GM12878 (cell line): ENCODE measurements at regions of chr5 and their contacts with region 1.

Region 1: DNA sequence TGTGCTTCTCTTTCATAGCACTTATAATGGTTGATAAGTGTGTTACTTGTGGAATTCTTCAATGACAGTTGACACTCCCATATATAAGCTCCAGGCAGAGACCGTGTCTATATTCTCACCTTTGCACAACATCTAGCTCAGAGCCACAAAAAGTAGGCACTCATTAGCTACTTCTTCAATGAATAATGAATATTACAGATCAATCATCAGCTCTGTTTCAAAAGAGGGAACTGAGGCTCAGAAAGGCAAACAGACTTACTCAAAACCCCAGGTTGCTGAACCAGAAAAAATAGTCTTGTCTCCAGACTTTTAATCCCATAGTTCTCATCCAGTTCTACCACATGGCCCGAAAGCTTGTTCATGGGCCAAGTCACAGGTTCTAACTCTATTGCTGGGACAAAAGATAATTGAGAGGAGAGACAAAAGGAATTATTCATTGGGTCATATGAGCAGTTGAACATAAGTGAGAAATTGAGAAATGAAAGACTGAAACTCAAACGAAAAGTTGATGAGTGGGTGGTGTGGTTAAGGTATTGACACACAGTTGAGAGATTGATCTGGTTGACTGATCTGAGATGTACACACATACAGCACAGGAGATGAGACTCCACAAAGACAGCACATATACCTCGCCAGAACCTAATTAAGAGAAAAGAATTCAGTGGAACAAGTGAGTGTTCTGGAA is 381.6 kb downstream of the EFNA5 start:
- DNase-seq: peak; percentile 91
- ATAC-seq: peak; percentile 94
- H3K4me3 ChIP-seq: no peak overlapping the region
- H3K27ac ChIP-seq: peak overlapping the region; percentile 14; the same call in 1 of the 2 replicates
- H3K4me1 ChIP-seq: peaks cover 23% of the 10 kb centered on the region
- H3K27me3 ChIP-seq: no peaks in the 10 kb centered on the region; a peak in 1 of 4 replicates
- CTCF ChIP-seq: no peak
- EP300 ChIP-seq: peak; percentile 92 to 95
- POLR2A ChIP-seq: no peak
- RAD21 ChIP-seq: no peak

Region 2: DNA sequence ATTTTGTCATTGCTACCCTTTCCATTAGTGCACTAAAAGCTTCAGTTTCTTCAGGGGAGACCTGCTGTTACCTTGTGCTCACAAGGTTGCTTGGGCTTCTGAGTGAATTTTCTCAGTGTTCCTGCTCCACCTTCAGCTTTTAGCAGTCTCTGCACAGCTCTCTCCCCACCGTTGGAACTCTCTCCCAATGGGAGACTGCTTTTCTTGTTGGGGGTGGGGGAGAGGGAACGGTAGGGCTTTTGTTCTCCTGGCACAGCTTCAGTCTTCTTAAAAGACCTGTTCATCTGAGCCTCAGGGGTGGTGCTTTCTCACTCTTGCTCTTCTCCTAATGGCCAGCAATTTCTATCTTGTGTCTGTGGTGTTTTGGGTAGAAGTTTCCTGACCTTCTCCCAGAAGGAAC is 534.1 kb before region 1 on chr5:
- CTCF ChIA-PET with region 1: no interaction called
- POLR2A ChIA-PET with region 1: no interaction called
- RAD21 ChIA-PET with region 1: no interaction called
- SMC1A ChIA-PET with region 1: no interaction called
- in situ Hi-C with region 1: no loop called
- intact Hi-C with region 1: no loop called
- DNase-seq: no peak
- ATAC-seq: no peak; the same call in 2 of the 3 replicates
- H3K4me3 ChIP-seq: no peak overlapping the region
- H3K27ac ChIP-seq: no peak overlapping the region
- H3K4me1 ChIP-seq: no peaks in the 10 kb centered on the region
- H3K27me3 ChIP-seq: no peaks in the 10 kb centered on the region
- CTCF ChIP-seq: no peak
- EP300 ChIP-seq: no peak
- POLR2A ChIP-seq: no peak
- RAD21 ChIP-seq: no peak

Region 3: DNA sequence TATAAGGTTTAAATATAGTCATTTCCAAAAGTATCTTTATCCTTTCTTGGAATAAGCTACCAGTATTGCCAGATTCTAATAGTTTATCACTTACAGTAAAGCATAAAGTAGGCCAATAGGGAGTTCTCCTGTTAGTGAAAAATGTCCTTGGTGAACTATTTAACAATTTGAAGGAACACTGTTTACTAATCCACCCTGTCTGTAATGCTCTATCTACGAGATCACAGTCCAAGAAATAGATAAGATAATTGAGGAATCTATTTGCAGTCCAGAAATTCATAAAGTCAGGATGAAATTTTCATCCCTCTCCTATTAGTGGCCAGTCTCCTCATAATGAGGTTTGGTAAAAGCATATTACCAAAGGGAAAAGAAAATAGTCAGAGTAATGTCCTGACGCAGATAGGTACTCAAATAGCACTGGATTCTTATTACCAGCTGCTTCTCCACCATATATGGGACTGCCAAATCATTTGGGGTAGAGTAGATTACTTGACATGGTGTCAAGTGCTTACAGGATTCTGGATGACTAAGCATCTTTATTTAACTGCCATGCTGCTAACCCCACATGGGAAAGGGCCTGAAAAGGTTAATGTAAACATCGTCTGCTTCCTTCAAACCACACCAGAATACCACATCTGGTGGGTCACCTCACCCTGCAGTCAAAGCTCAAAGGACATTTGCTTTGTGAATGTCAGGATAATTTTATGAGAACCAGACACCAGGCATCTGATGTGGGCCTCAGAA is 426.6 kb before region 1 on chr5:
- CTCF ChIA-PET with region 1: no interaction called
- POLR2A ChIA-PET with region 1: no interaction called
- RAD21 ChIA-PET with region 1: no interaction called
- SMC1A ChIA-PET with region 1: no interaction called
- in situ Hi-C with region 1: no loop called
- intact Hi-C with region 1: no loop called
- DNase-seq: no peak
- ATAC-seq: peak; percentile 39
- H3K4me3 ChIP-seq: no peak overlapping the region
- H3K27ac ChIP-seq: no peak overlapping the region
- H3K4me1 ChIP-seq: no peaks in the 10 kb centered on the region
- H3K27me3 ChIP-seq: no peaks in the 10 kb centered on the region
- CTCF ChIP-seq: no peak
- EP300 ChIP-seq: no peak
- POLR2A ChIP-seq: no peak
- RAD21 ChIP-seq: no peak

Region 4: GRCh38 chr5:107274576-107274975 is 14.6 kb before region 1 on chr5:
- CTCF ChIA-PET with region 1: interaction called, 3 read pairs
- POLR2A ChIA-PET with region 1: interaction called, 5 read pairs
- RAD21 ChIA-PET with region 1: no interaction called
- SMC1A ChIA-PET with region 1: interaction called, 19 read pairs
- in situ Hi-C with region 1: no loop called
- intact Hi-C with region 1: no loop called
- DNase-seq: no peak
- ATAC-seq: no peak
- H3K4me3 ChIP-seq: no peak overlapping the region
- H3K27ac ChIP-seq: no peak overlapping the region
- H3K4me1 ChIP-seq: no peaks in the 10 kb centered on the region
- H3K27me3 ChIP-seq: peaks cover 0 to 2% of the 10 kb centered on the region in 2 experiments; a peak in 1 of 4 replicates
- CTCF ChIP-seq: no peak
- EP300 ChIP-seq: no peak
- POLR2A ChIP-seq: no peak
- RAD21 ChIP-seq: no peak

Region 5: DNA sequence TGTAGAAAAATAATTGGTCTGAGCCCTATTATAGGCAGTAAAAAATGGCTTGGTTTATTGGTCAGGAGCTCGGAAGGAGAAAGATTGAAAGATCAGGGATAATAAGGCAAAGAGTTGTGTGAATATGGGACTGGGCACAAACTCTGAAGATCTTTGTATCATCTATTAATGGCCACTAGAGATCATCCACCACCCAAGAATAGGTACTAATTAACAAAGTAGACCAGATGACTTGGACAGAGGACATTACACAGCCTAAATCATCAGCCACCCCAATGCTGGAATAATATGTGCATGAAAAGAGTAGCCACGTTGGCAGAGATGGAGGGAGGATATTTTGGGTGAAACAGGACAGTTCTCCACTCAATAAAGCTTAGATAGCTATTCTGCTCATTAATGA is 17.4 kb after region 1 on chr5:
- CTCF ChIA-PET with region 1: interaction called, 4 read pairs
- POLR2A ChIA-PET with region 1: interaction called, 10 read pairs
- RAD21 ChIA-PET with region 1: interaction called, 4 read pairs
- SMC1A ChIA-PET with region 1: interaction called, 6 read pairs
- in situ Hi-C with region 1: no loop called
- intact Hi-C with region 1: no loop called
- DNase-seq: no peak
- ATAC-seq: 0 out of 3 replicates have a peak, but pooled peaks have one; percentile 26
- H3K4me3 ChIP-seq: no peak overlapping the region
- H3K27ac ChIP-seq: no peak overlapping the region
- H3K4me1 ChIP-seq: no peaks in the 10 kb centered on the region
- H3K27me3 ChIP-seq: 0 out of 4 replicates have a peak, but pooled peaks cover 0 to 2% of the 10 kb centered on the region in 2 experiments
- CTCF ChIP-seq: no peak
- EP300 ChIP-seq: no peak
- POLR2A ChIP-seq: no peak
- RAD21 ChIP-seq: peak; percentile 51; the same call in 1 of the 2 replicates

Region 6: DNA sequence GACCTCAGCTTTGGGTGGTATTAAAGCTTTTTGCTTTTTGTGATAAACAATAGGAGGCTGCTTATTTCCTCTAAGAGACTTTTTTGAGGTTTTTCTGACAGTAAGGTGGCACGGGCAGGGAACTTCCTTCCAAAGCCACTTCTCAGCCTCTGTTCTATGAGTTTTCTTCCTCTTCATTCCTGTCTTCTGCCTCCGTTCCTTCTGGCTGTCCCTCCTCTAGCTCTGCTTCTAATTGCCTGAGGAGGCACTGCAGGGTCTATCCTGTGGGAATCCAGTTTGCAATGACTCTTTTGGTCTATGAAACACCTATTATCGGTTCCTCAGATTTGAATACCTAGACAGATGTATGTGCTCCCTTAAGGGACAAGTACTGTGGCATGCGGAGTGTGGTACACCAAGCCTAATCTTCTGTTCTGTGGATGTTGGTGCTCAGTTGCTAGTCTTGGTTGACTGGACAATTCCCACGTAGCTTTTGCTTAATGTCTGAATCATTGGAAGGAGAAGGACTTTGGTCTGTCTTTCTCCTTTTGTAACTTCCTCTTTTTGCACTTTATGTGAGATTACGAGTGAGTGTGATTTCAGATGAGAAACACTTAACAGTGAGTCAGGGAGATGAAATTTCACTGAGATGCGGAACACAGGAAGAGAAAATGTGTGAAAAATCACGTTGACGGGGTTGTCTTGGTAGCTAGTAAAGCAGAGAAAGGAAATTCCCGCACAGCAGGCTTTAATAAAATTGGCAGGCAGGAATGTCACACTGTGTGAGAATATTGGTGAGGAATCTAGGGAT is 76.3 kb after region 1 on chr5:
- CTCF ChIA-PET with region 1: interaction called, 3 read pairs
- POLR2A ChIA-PET with region 1: interaction called, 3 read pairs
- RAD21 ChIA-PET with region 1: interaction called, 12 read pairs
- SMC1A ChIA-PET with region 1: interaction called, 16 read pairs
- in situ Hi-C with region 1: no loop called
- intact Hi-C with region 1: loop called (anchors 2 kb)
- DNase-seq: peak; percentile 92
- ATAC-seq: peak; percentile 81
- H3K4me3 ChIP-seq: 0 out of 2 replicates have a peak overlapping the region, but pooled peaks have one; percentile 6
- H3K27ac ChIP-seq: peak overlapping the region; percentile 47
- H3K4me1 ChIP-seq: peaks cover 21% of the 10 kb centered on the region
- H3K27me3 ChIP-seq: no peaks in the 10 kb centered on the region
- CTCF ChIP-seq: 0 out of 6 replicates have a peak, but pooled peaks of 1 of the 3 experiments have one; percentile 3
- EP300 ChIP-seq: peak; percentile 12 to 32; a peak in 2 of 4 replicates
- POLR2A ChIP-seq: no peak
- RAD21 ChIP-seq: no peak

Region 7: DNA sequence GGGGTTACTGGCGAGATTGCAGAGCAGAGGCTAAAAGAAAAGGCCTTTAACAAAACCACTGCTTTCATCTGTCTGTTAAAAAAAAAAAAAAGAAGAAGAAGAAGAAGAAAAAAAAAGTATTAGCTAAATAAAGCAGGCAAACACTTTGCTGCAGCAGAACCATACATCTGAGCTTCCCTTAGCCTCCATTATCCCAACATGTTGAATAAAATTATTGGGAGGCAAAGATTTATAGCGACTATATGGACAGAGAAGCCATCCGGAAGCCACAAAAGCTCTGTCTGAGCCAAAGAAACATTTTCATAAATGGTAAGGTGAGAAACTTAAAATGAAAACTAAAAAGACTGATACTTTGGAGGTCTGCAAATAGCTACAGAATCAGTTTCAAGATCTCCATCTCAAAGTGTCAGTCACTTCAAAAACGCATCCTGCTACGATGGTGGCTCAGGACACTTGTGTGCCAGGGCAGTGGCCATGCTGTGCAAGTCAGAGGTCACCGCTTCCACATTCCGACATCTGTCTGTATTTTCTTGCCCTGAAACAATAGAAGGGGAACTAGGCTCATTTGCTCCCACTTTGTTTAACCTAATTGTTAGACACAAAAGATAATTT is 372.0 kb after region 1 on chr5:
- CTCF ChIA-PET with region 1: no interaction called
- POLR2A ChIA-PET with region 1: no interaction called
- RAD21 ChIA-PET with region 1: no interaction called
- SMC1A ChIA-PET with region 1: no interaction called
- in situ Hi-C with region 1: no loop called
- intact Hi-C with region 1: no loop called
- DNase-seq: peak; percentile 60
- ATAC-seq: peak; percentile 66
- H3K4me3 ChIP-seq: no peak overlapping the region
- H3K27ac ChIP-seq: no peak overlapping the region
- H3K4me1 ChIP-seq: no peaks in the 10 kb centered on the region; the same call in 1 of the 2 replicates
- H3K27me3 ChIP-seq: no peaks in the 10 kb centered on the region; a peak in 1 of 4 replicates
- CTCF ChIP-seq: no peak
- EP300 ChIP-seq: no peak
- POLR2A ChIP-seq: no peak
- RAD21 ChIP-seq: no peak